Activated CD4-positive, alpha-beta T cell treated with anti-CD3 and anti-CD28 coated beads, Interleukin-2, amount 10 ng/mL, durations not matched to agents 24 days and 14 days (primary cell): ENCODE measurements at regions of chr9 and their contacts with region 1.

Region 1: DNA sequence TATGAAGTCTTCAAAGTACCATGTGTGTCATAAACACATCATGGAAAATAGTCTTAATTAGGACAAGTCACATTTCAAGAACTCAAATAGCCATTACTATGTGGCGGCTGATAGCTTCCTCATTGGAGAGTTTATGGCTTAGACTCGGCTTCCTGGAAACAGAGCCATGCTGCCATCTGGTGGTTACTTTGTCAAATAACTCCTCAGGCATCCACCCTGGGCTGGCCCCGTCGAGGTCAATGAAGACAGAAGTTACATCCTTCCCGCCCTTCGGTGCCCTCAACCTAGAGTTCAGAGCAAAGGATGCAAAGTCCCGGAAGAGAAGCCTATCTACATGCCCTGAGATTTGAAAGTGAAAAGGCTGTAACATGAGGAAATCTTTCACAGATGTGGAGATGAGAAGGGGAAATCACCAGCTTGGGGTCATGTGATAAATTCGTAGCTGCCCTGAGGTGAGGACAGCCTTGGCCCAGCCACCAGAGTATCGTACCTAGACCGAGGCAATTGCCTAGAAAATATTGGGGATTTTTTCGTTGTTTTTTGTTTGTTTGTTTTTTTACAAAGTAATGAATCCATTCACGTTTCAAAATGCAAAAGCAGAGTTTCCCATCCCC is 45.5 kb upstream of the ZNF169 start:
- DNase-seq: peak; percentile 91
- H3K4me3 Mint-ChIP-seq: peak overlapping the region; percentile 33
- H3K27ac Mint-ChIP-seq: peak overlapping the region; percentile 64
- H3K4me1 Mint-ChIP-seq: peaks cover 4% of the 10 kb centered on the region
- H3K27me3 Mint-ChIP-seq: peaks cover 12% of the 10 kb centered on the region

Region 2: DNA sequence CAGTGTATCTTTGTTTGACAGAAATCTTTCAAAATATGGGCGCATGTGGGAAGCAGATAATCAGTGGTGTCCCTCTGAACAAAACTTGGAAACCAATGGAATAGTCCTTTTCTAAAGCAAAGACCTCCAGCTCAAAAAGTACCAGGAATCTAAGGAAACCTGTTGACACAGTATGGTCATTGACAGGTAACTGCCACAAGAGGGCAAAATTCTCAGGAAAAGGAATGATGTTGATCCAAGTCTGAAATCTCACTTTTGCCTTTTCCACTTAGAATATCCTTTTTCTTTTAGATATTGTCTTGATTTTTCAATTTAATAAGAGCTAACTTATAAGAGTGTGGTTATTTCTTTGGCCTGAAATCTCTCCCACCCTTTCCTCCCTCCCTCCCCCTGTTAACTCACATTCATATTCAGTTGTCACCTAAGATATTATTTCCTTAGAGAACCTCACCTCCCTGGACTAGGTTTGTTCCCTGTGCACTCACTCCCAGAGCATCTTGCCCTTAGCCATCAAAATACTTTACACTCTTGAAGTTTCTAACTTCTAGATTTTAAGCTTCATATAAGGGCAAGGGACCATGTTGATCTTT is 199.5 kb before region 1 on chr9:
- intact Hi-C with region 1: loop called (anchors 1 kb)
- DNase-seq: no peak
- H3K4me3 Mint-ChIP-seq: no peak overlapping the region
- H3K27ac Mint-ChIP-seq: no peak overlapping the region
- H3K4me1 Mint-ChIP-seq: no peaks in the 10 kb centered on the region
- H3K27me3 Mint-ChIP-seq: peaks cover 6% of the 10 kb centered on the region

Region 3: DNA sequence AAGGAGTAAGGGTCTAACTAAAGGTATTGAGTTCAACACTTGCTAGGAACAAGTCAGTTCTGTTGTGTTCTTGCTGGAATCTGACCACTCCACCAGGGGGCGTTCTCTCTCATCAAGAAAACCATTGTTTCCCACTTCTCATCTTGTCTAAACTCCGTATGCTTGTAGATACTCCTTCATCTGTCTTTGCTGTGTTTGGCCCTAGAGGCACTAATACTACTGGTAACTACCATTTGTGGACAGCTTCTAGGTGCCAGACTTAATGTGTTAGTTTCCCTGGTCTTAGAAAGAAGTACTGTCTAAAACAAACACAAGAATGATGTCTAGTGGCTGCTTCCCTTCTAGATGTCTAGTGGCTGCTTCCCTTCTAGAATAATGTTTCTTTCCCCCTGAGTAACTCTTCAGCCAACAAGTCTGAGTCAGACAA is 148.1 kb before region 1 on chr9:
- intact Hi-C with region 1: loop called (anchors 1 kb)
- DNase-seq: peak; percentile 90
- H3K4me3 Mint-ChIP-seq: no peak overlapping the region
- H3K27ac Mint-ChIP-seq: no peak overlapping the region
- H3K4me1 Mint-ChIP-seq: peaks cover 4% of the 10 kb centered on the region
- H3K27me3 Mint-ChIP-seq: no peaks in the 10 kb centered on the region

Region 4: DNA sequence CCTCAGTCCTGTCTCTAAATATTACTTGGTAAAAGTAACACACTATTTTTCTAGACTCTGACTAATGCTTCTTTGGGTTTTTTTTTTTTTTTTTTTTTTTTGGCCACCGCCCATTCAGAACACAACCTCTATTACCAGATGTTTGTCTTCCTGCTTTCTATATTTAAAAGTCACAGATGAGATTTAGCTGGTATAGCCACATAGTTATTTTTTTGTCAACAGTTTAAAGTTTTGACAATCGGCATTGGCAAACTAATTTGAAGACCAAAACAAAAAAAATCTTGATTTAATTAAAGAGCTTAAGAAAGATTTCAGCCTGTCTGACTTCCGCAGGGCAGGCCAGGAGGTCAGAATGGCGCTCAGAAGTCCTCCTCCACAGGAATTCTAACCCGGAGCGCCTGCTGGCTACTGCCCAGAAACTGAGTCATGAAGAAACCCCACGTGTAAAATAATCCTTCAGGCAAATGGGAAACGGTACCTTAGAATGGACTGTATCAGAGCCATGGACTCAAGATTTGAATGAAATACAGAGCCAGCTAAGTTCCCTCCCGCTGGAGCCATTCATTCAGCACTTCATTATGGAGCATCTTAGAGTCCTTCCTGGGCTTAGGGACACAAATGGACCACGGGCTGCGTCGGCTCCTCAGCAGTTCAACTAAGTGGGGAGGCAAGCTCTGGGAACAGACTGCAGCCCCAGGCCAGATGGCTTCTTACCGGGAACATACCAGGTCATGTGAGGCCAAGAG is 73.8 kb before region 1 on chr9:
- intact Hi-C with region 1: loop called (anchors 10 kb)
- DNase-seq: no peak
- H3K4me3 Mint-ChIP-seq: no peak overlapping the region
- H3K27ac Mint-ChIP-seq: no peak overlapping the region
- H3K4me1 Mint-ChIP-seq: no peaks in the 10 kb centered on the region
- H3K27me3 Mint-ChIP-seq: peaks cover 7% of the 10 kb centered on the region